PC-9 (cell line): ENCODE measurements at regions of chr2 and their contacts with region 1.

Region 1: DNA sequence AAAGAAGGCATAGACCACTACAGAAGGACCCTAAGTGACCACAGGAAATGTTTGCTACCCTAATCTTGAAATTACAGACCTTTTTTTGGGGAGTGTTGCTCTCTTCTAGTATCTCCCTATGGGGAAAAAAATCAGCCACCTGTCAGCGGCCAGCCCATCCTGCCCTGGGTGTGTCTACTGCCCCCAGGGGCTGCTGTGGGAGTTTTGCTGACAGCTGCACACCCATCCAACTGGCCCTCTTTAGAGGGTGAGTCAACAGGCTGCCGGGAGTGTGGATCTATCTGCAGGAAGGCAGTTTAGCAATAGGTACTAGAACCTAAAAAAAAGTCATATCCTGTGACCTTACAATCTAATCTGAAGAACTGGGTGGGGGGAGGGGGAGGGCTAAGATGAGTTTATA is 796 bp upstream of the DYSF start:
- DNase-seq: peak; percentile 71 to 93
- H3K4me3 ChIP-seq: peak overlapping the region; percentile 69
- H3K27ac ChIP-seq: peak overlapping the region; percentile 74
- H3K4me1 ChIP-seq: peaks cover 61% of the 10 kb centered on the region
- H3K27me3 ChIP-seq: no peaks in the 10 kb centered on the region
- CTCF ChIP-seq: peak; percentile 55; the same call in 1 of the 2 replicates

Region 2: DNA sequence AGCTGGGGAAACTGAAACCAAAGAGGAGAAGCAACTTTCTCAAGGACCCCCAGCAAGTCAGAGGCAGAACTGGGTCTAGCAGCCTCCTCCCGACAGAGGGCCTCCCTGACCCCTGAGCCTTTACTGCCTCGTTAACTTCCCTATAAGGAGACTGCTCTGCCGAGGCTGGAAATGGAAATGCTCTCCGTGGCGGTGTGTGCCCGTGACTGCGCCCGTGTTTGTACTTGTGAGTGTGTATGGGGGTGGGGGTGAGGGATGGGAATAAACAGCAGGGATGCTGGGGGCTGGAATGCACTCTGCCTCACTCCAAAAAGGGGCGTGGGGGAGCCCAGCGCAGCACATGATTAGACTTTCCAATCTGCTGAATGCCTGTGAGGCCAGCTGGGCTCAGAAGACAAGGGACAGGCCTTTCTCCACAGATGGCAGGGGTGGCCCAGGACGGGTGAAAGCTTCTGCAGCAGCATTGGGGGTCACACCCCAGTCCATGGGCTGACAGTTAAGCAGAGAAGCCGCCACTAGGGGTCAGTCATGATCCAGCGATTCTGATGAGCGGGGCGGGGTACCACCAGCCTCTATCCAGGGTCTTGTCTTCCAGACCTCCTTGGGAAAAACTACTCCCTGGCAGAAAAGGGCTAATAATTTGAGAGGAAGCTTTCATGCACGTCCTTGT is 295.3 kb before region 1 on chr2:
- CTCF ChIA-PET with region 1: no interaction called
- POLR2A ChIA-PET with region 1: no interaction called
- intact Hi-C with region 1: no loop called
- DNase-seq: peak in 1 of 2 experiments; percentile 34
- H3K4me3 ChIP-seq: no peak overlapping the region
- H3K27ac ChIP-seq: no peak overlapping the region
- H3K4me1 ChIP-seq: no peaks in the 10 kb centered on the region
- H3K27me3 ChIP-seq: no peaks in the 10 kb centered on the region
- CTCF ChIP-seq: peak; percentile 75

Region 3: DNA sequence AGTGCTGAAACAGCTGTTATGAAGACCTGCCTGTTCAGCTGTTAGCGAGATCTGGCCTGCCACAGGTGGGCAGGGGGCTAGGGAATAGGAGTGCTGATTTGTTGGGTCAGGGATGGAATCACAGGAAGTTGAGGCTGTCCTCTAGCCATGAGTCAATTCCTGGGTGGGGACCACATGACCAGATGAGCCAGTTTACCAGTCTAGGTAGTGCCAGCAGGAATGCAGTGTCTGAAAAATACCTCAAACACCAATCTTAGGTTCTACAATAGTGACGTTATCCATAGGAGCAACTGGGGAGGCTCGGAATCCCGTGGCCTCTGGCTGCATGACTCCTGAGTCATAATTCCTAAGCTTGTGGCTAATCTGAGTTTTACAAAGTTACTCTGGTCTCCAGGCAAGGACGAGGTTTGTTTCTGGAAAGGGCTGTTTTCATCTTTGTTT is 45.7 kb after region 1 on chr2:
- CTCF ChIA-PET with region 1: no interaction called
- POLR2A ChIA-PET with region 1: no interaction called
- intact Hi-C with region 1: loop called (anchors 2 kb)
- DNase-seq: peak; percentile 78 to 98
- H3K4me3 ChIP-seq: peak overlapping the region; percentile 19; the same call in 1 of the 2 replicates
- H3K27ac ChIP-seq: peak overlapping the region; percentile 80
- H3K4me1 ChIP-seq: peaks cover 34% of the 10 kb centered on the region
- H3K27me3 ChIP-seq: no peaks in the 10 kb centered on the region
- CTCF ChIP-seq: no peak